CD8-positive, alpha-beta T cell (primary cell): ENCODE measurements at regions of chr4 and their contacts with region 1.

Region 1: DNA sequence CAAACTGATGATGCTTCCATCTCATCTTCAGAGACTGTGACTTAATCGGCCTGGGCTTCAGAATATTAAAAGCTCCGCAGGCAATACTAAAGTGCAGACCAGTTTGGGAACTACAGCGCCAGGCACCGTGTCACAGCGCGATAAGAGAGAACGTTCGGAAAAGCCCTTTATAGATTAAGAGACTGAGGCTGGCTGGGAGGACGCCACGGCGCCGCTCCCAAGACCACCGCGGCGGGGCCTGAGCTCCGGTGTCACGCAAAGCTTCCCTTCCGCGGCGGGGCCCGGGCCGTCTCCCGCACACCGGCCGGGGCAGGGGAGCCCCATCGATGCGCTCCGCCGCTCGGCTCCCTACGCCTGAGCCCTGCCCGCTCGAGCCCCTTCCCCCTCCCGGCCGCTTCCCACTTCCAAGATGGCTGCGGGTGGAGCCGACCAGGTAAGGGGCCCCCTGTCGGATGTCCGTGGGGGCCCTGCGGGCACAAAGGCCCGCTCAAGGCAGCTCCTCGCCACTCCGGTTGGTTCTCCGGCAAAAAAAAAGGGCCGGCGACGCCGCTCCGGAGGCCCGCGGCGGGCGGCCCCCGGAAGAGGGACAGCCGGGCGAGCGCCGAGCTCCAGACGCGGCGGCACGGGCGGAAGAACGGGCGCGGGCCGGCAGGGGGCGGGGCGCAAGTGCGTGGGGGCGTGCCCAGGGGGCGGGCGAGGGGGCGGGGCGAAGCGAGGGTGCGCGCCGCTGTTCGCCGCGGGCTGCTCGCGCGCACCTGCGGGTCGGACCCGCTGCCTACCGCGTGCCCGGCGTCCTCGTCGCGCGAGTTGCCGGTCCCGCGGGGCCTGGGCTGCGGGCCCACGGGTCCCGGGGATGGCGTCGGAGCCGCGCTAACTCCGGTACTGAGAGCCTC is at the start of gene TBC1D14:
- DNase-seq: peak; percentile 72 to 94 (median 84)
- ATAC-seq: peak; percentile 85
- H3K4me3 ChIP-seq: peak within 1 kb of the TSS; percentile 78 to 80
- H3K4me3 Mint-ChIP-seq: peak within 1 kb of the TSS; percentile 92
- H3K27ac ChIP-seq: peak within 1 kb of the TSS; percentile 81 to 98
- H3K27ac Mint-ChIP-seq: peak within 1 kb of the TSS; percentile 91
- H3K4me1 ChIP-seq: peaks cover 37% of the 10 kb centered on the region
- H3K4me1 Mint-ChIP-seq: peaks cover 53% of the 10 kb centered on the region
- H3K27me3 ChIP-seq: no peaks in the 10 kb centered on the region
- H3K27me3 Mint-ChIP-seq: no peaks in the 10 kb centered on the region
- CTCF ChIP-seq: no peak
- total RNA-seq, gene TBC1D14: 29.2 to 30.9 TPM

Region 2: DNA sequence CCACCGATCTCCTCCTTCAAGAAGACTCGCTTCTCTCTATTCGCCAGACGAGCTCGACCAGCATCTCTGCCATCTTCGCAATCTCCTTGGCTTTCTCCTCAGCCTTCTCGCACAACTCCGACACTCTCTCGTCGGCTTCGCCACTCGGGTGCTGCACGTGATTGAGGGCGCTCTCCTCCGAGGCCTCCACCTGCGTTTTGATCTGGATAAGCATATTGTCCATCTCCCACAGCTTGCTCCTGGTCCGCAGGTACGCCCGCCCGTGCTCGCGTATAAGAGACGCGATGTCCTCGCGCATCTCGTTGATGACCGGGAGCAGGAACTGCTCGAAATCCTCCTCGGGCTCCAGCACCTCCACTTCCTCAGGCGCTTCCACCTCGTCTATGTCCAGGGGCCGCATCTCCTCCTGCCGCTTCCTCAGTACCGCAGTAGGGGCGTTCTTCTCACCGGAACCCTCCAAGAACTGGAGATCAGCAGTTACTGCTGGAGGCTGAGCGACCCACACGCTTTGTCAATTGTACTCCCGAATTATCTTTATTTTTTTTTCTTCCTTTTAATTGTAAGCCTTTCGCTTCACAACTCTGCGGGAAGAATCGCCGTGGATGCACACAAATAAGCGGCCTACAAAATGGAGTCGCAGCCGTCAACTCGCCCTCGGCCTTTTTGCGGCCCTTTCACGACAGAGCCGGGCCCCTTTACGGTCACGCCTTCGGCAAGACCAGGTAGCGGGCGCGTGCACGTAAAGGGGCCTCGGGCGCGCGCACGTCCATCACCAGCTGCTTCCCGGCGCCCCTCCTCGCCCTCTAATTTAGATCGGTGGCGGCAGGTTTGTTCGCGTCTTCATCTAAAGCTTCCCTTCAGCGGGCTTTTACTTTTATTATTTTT is 199.8 kb before region 1 on chr4 and contains the start of gene MRFAP1L1:
- CTCF ChIA-PET with region 1: no interaction called
- POLR2A ChIA-PET with region 1: no interaction called
- intact Hi-C with region 1: loop called in 1 of 2 experiments (anchors 1 kb)
- DNase-seq: peak; percentile 92 to 99 (median 97)
- ATAC-seq: peak; percentile 89
- H3K4me3 ChIP-seq: peak within 1 kb of the TSS; percentile 73 to 86
- H3K4me3 Mint-ChIP-seq: peak within 1 kb of the TSS; percentile 98
- H3K27ac ChIP-seq: peak within 1 kb of the TSS; percentile 79
- H3K27ac Mint-ChIP-seq: peak within 1 kb of the TSS; percentile 99
- H3K4me1 ChIP-seq: peaks cover 48% of the 10 kb centered on the region
- H3K4me1 Mint-ChIP-seq: peaks cover 65% of the 10 kb centered on the region
- H3K27me3 ChIP-seq: no peaks in the 10 kb centered on the region
- H3K27me3 Mint-ChIP-seq: no peaks in the 10 kb centered on the region
- CTCF ChIP-seq: no peak
- total RNA-seq, gene MRFAP1L1: 27.5 to 30.0 TPM

Region 3: GRCh38 chr4:6761649-6762602 is 147.4 kb before region 1 on chr4:
- CTCF ChIA-PET with region 1: no interaction called
- POLR2A ChIA-PET with region 1: no interaction called
- intact Hi-C with region 1: no loop called
- DNase-seq: peak in 6 of 9 experiments; percentile 19 to 52 (median 35)
- ATAC-seq: peak; percentile 74
- H3K4me3 ChIP-seq: no peak overlapping the region
- H3K4me3 Mint-ChIP-seq: peak overlapping the region; percentile 74
- H3K27ac ChIP-seq: no peak overlapping the region
- H3K27ac Mint-ChIP-seq: peak overlapping the region; percentile 81
- H3K4me1 ChIP-seq: peaks cover 8% of the 10 kb centered on the region
- H3K4me1 Mint-ChIP-seq: peaks cover 38% of the 10 kb centered on the region
- H3K27me3 ChIP-seq: no peaks in the 10 kb centered on the region
- H3K27me3 Mint-ChIP-seq: no peaks in the 10 kb centered on the region
- CTCF ChIP-seq: no peak

Region 4: GRCh38 chr4:6898763-6899162 is 10.6 kb before region 1 on chr4:
- CTCF ChIA-PET with region 1: interaction called, 5 read pairs
- POLR2A ChIA-PET with region 1: interaction called, 22 read pairs
- intact Hi-C with region 1: no loop called
- DNase-seq: peak in 1 of 9 experiments; percentile 31
- ATAC-seq: peak; percentile 20
- H3K4me3 ChIP-seq: no peak overlapping the region
- H3K4me3 Mint-ChIP-seq: peak overlapping the region; percentile 24
- H3K27ac ChIP-seq: peak overlapping the region; percentile 33 to 77
- H3K27ac Mint-ChIP-seq: peak overlapping the region; percentile 89
- H3K4me1 ChIP-seq: peaks cover 23% of the 10 kb centered on the region
- H3K4me1 Mint-ChIP-seq: peaks cover 34% of the 10 kb centered on the region
- H3K27me3 ChIP-seq: no peaks in the 10 kb centered on the region
- H3K27me3 Mint-ChIP-seq: no peaks in the 10 kb centered on the region
- CTCF ChIP-seq: no peak

Region 5: DNA sequence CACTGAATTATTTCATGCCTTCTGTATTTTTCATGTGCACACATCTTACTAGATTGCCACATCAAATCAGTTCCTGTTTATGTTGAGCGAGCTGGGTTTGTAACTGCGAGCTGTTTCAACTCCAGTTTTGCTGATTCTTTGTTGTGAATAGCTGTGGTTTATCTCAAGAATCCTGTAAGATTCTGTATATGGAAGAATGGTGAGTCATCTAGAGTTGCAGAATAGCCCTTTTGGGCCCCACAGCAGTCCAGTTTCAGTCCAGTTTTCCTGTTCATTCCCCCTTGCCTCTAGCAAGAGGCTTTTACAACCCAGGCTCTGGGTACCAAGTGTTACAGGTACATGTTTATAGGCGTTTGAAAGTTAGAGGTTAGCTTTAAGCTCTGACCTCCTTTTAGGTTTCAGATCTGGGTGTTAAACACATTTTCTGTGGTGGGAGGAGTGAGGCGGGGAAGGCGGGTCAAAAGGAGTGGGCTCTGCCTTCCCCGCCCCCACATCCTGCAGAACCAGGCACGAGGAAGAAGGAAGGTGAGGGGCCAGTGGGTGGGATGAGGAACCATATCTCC is 33.0 kb after region 1 on chr4:
- CTCF ChIA-PET with region 1: interaction called, 6 read pairs
- POLR2A ChIA-PET with region 1: interaction called, 17 read pairs
- intact Hi-C with region 1: loop called in 1 of 2 experiments (anchors 1 kb)
- DNase-seq: peak in 8 of 9 experiments; percentile 26 to 75 (median 50)
- ATAC-seq: peak; percentile 81
- H3K4me3 ChIP-seq: peak overlapping the region; percentile 25 to 30
- H3K4me3 Mint-ChIP-seq: peak overlapping the region; percentile 79
- H3K27ac ChIP-seq: peak overlapping the region; percentile 18 to 72
- H3K27ac Mint-ChIP-seq: peak overlapping the region; percentile 92
- H3K4me1 ChIP-seq: peaks cover 60% of the 10 kb centered on the region
- H3K4me1 Mint-ChIP-seq: peaks cover 83% of the 10 kb centered on the region
- H3K27me3 ChIP-seq: no peaks in the 10 kb centered on the region
- H3K27me3 Mint-ChIP-seq: no peaks in the 10 kb centered on the region
- CTCF ChIP-seq: no peak

Region 6: DNA sequence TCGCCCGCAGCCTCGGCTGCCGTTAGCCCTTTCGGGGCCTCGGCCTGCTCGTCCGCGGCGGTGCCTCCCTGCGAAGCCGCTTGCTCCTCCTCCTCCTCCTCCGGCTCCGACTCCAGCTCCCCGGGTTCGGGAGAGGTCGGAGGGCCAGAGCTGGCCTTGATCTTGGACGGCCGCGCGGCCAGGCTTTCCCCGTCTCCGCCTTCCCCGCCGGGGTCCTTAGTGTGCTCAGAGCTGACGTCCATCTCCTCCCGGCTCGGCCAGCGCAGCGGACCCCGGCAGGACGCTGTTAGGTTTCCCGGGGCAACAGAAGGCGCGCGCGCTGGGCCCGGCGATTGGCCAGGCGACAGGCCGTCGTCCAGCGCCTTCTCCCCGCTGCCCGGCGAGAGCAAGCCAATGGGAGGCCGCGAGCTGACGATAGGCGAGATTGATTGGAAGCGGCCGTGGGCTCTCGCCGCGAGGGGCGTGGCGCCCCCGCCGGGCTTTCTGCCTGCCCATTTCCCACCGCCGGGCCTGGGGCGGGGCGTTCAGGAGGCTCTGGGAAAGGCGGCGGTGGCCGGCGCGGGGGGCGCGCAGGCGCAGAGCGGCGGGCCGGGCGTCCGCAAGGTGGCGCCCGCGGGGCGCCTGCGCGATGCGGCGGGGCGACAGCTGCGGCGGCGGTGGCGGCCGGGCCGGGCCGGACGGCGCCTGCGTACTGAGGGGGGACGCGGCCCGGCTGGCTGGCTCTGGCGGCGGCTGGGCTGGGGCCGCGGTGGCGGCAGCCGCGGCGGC is 133.6 kb after region 1 on chr4 and contains the start of gene TADA2B:
- CTCF ChIA-PET with region 1: interaction called, 7 read pairs
- POLR2A ChIA-PET with region 1: interaction called, 18 read pairs
- intact Hi-C with region 1: loop called (anchors 1 kb)
- DNase-seq: peak; percentile 74 to 95 (median 89)
- ATAC-seq: peak; percentile 76
- H3K4me3 ChIP-seq: peak within 1 kb of the TSS; percentile 83 to 94
- H3K4me3 Mint-ChIP-seq: peak within 1 kb of the TSS; percentile 91
- H3K27ac ChIP-seq: peak within 1 kb of the TSS; percentile 63 to 84
- H3K27ac Mint-ChIP-seq: peak within 1 kb of the TSS; percentile 88
- H3K4me1 ChIP-seq: peaks cover 40% of the 10 kb centered on the region
- H3K4me1 Mint-ChIP-seq: peaks cover 44% of the 10 kb centered on the region
- H3K27me3 ChIP-seq: no peaks in the 10 kb centered on the region
- H3K27me3 Mint-ChIP-seq: no peaks in the 10 kb centered on the region
- CTCF ChIP-seq: no peak
- total RNA-seq, gene TADA2B: 41.9 to 45.4 TPM

Region 7: GRCh38 chr4:7295911-7296660 is 386.8 kb after region 1 on chr4:
- CTCF ChIA-PET with region 1: no interaction called
- POLR2A ChIA-PET with region 1: no interaction called
- intact Hi-C with region 1: no loop called
- DNase-seq: no peak
- ATAC-seq: no peak
- H3K4me3 ChIP-seq: no peak overlapping the region
- H3K4me3 Mint-ChIP-seq: no peak overlapping the region
- H3K27ac ChIP-seq: no peak overlapping the region
- H3K27ac Mint-ChIP-seq: no peak overlapping the region
- H3K4me1 ChIP-seq: no peaks in the 10 kb centered on the region
- H3K4me1 Mint-ChIP-seq: no peaks in the 10 kb centered on the region
- H3K27me3 ChIP-seq: no peaks in the 10 kb centered on the region
- H3K27me3 Mint-ChIP-seq: peaks cover 15% of the 10 kb centered on the region
- CTCF ChIP-seq: no peak